ENCODE measurements at regions of chr14 and their contacts with region 1.

Region 1: GRCh38 chr14:59688224-59689170 is 111.9 kb upstream of the CCDC175 start:
- DNase-seq: peak; percentile 44
- H3K4me3 ChIP-seq: no peak overlapping the region
- H3K27ac ChIP-seq: no peak overlapping the region
- H3K4me1 ChIP-seq: no peaks in the 10 kb centered on the region
- H3K27me3 ChIP-seq: no peaks in the 10 kb centered on the region
- CTCF ChIP-seq: peak; percentile 62 to 71
- POLR2A ChIP-seq: no peak

Region 2: GRCh38 chr14:59632381-59632780 is 56.1 kb before region 1 on chr14:
- CTCF ChIA-PET with region 1: interaction called, 13 read pairs
- POLR2A ChIA-PET with region 1: no interaction called
- dilution Hi-C with region 1: no loop called
- intact Hi-C with region 1: no loop called
- DNase-seq: peak; percentile 24
- H3K4me3 ChIP-seq: no peak overlapping the region
- H3K27ac ChIP-seq: no peak overlapping the region
- H3K4me1 ChIP-seq: no peaks in the 10 kb centered on the region
- H3K27me3 ChIP-seq: peaks cover 16 to 47% of the 10 kb centered on the region in 2 experiments
- CTCF ChIP-seq: peak; percentile 49 to 52
- POLR2A ChIP-seq: no peak

Region 3: GRCh38 chr14:59698793-59699192 is 10.3 kb after region 1 on chr14:
- CTCF ChIA-PET with region 1: interaction called, 25 read pairs
- POLR2A ChIA-PET with region 1: no interaction called
- dilution Hi-C with region 1: no loop called
- intact Hi-C with region 1: no loop called
- DNase-seq: no peak
- H3K4me3 ChIP-seq: no peak overlapping the region
- H3K27ac ChIP-seq: no peak overlapping the region
- H3K4me1 ChIP-seq: no peaks in the 10 kb centered on the region
- H3K27me3 ChIP-seq: no peaks in the 10 kb centered on the region
- CTCF ChIP-seq: no peak
- POLR2A ChIP-seq: no peak